Heart right ventricle (tissue), 16 donors: ENCODE measurements at regions of chr17 and their contacts with region 1.

Region 1: GRCh38 chr17:409848-410545 is 57.4 kb upstream of the RPH3AL start:
- DNase-seq: peak; percentile 99 to 100
- ATAC-seq: peak; percentile 93 to 98 (median 95)
- H3K4me3 ChIP-seq: peak overlapping the region; percentile 61 to 92 (median 83)
- H3K27ac ChIP-seq: peak overlapping the region; percentile 53 to 94 (median 72)
- H3K4me1 ChIP-seq: peaks cover 4 to 34% (median 23%) of the 10 kb centered on the region in 9 donors
- H3K27me3 ChIP-seq: no peaks in the 10 kb centered on the region
- CTCF ChIP-seq: peak in 1 of 9 donors; percentile 14

Region 2: DNA sequence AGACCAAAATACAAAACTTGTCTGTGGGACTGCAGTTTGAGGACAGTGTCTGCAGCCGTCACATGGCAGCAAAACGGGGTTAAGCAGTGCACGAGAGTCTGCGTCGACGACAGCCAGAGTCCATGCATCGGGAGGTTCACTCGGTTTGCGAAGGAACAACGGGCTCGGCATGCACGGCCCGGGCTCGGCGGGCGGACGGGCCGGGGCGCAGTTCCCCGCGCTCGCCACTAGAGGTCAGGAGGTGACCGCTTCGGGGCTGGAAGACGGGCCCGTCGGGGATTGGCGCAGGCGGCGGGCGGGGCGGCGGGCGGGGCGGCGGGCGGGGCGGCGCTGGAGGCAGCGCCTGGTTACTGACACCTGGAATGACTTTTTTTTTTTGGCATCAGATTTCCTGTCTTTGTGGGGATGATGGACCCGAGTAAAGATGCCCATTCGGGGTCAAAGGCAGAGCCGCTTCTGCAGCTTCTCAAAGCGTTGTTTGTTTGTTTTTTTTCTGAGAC is 266.2 kb before region 1 on chr17:
- intact Hi-C with region 1: loop called in 1 of 10 experiments (anchors 5 kb)
- DNase-seq: peak; percentile 78 to 90
- ATAC-seq: peak; percentile 84 to 93 (median 88)
- H3K4me3 ChIP-seq: peak overlapping the region in 1 of 10 donors; percentile 24
- H3K27ac ChIP-seq: no peak overlapping the region
- H3K4me1 ChIP-seq: peaks cover 0 to 12% (median 4%) of the 10 kb centered on the region in 9 donors
- H3K27me3 ChIP-seq: peaks cover 0 to 3% (median 0%) of the 10 kb centered on the region in 7 donors
- CTCF ChIP-seq: peak; percentile 90 to 97 (median 93)

Region 3: DNA sequence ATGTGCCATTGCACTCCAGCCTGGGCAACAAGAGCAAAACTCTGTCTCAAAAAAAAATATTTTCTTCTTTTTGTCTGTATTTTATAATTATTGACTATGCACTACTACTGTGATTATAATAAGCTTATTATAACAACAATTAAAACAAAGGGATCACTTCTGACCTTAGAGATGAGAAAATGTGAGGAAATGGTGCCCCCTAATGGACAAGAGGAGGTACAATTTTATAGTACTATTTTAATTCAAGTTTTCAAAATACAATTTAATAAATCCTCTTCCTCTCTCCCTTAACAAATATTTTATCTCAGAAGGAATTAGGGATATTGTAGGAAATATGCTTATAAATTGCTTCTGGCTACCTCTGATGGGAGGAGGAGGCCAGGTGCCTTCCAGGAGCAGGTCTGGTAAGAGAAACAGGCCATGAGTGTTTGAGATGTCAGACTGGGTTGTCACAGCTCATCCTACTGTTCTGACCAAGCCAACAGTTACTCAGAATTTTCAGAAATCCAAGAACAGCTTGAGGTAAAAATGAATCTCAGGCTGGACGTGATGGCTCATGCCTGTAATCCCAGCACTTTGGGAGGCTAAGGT is 290.6 kb after region 1 on chr17:
- intact Hi-C with region 1: loop called (anchors 1 to 5 kb)
- DNase-seq: no peak
- ATAC-seq: peak in 7 of 8 donors; percentile 37 to 74 (median 54)
- H3K4me3 ChIP-seq: no peak overlapping the region
- H3K27ac ChIP-seq: no peak overlapping the region
- H3K4me1 ChIP-seq: peaks cover 0 to 36% (median 14%) of the 10 kb centered on the region in 9 donors
- H3K27me3 ChIP-seq: no peaks in the 10 kb centered on the region
- CTCF ChIP-seq: peak; percentile 62 to 81 (median 76)

Region 4: DNA sequence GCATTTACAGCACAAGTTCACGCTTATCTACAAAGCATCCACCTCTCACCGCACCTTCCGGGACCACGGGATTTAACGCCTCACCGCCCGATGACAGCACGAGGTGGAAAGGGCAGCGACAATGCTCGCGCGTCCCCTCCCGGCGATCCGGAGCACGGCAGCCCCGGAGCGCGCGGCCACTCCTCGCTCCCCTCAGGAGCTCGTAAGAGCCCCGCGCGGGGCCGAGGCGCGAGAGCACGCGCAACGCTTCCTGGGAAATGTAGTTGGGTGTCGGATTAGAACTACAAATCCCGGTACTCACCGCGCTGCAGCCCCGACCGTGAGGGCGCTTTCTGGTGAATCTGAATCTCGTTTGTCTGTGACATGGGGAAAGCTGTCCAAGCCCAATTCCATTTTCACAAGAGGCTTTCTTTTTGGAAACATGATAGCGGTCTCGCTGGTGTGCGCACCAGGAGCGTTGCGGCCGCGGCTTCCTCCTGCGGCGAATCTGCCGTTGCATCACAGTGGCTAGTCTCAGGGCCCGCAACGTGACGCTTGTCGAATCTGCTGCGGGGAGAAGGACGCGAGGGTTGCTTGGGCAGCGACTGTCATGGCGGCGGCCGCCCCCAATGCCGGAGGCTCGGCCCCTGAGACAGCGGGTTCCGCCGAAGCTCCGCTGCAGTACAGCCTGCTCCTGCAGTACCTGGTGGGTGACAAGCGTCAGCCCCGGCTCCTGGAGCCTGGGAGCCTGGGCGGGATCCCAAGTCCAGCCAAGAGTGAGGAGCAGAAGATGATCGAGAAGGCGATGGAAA is 586.8 kb after region 1 on chr17 and contains the start of gene TIMM22:
- intact Hi-C with region 1: loop called in 1 of 10 experiments (anchors 5 kb)
- DNase-seq: peak; percentile 91 to 95
- ATAC-seq: peak; percentile 93 to 97 (median 96)
- H3K4me3 ChIP-seq: peak within 1 kb of the TSS; percentile 74 to 100 (median 92)
- H3K27ac ChIP-seq: peak within 1 kb of the TSS; percentile 83 to 95 (median 93)
- H3K4me1 ChIP-seq: peaks cover 19 to 50% (median 43%) of the 10 kb centered on the region in 9 donors
- H3K27me3 ChIP-seq: no peaks in the 10 kb centered on the region
- CTCF ChIP-seq: peak; percentile 85 to 98 (median 94)
- total RNA-seq, gene TIMM22: 15.0 to 19.8 (median 18.5) TPM